Ascending aorta (tissue), 2 donors: ENCODE measurements at regions of chr7 and their contacts with region 1.

Region 1: DNA sequence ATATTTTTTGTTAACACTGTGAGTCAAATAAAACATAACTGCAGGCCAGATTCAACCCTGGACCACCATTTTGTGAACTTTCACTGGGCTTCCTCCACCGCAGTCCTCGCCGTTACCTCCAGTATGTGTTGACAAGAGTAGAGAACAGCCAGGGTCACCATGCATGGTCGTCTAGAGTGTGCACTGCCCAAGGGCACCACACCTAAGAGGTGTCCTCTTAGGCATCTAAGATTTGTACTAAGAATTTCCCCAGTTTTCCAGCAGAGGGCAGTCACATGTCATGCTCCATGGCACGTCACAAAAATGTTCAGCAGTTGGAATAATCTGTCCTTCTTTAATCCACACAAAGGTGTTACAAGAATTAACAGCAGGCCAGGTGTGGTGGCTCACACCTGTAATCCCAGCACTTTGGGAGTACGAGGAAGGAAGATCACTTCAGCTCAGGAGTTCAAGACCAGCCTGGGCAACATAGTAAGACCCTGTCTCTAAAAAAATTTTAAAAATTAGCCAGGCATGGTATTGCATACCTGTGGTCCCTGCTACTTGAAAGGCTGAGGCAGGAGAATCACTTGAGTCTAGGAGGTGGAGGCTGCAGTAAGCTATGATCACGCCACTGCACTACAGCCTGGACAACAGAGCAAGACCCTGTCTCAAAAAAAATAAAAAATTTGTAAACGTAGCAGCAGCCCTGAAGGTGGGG is 71.2 kb upstream of the FOXK1 start:
- DNase-seq: peak in 1 of 2 donors; percentile 74
- H3K4me3 ChIP-seq: no peak overlapping the region
- H3K27ac ChIP-seq: no peak overlapping the region
- H3K4me1 ChIP-seq: peaks cover 0 to 11% of the 10 kb centered on the region in 2 donors
- H3K27me3 ChIP-seq: no peaks in the 10 kb centered on the region
- CTCF ChIP-seq: peak; percentile 86 to 89 (median 87)

Region 2: GRCh38 chr7:4361757-4362156 is 249.2 kb before region 1 on chr7:
- intact Hi-C with region 1: no loop called
- DNase-seq: no peak
- H3K4me3 ChIP-seq: no peak overlapping the region
- H3K27ac ChIP-seq: no peak overlapping the region
- H3K4me1 ChIP-seq: no peaks in the 10 kb centered on the region
- H3K27me3 ChIP-seq: no peaks in the 10 kb centered on the region
- CTCF ChIP-seq: peak in 1 of 3 experiments; percentile 9

Region 3: DNA sequence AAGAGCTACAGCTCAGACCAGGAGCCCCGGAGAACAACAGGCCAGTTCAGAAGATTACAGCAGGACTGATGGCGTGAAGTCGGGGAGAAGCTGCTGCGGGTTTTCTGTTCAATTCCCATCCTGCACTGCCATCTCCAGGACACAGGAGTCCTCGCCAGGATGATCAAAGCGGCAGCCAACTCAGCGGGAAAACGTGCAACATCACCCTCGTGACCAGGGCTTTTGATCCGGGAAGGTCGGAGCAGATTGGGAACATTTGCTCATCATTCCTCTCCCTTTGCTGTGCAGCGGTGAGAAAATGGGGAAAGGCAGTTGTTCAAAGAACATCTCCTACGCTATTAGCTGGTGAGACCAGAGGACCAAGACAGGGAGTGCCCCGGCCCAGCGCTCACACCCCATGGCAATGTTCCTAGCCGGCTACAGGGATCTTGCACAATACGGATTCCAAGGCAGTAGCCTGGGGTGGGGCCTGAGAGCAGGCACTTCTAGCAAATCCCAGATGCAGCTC is 20.8 kb after region 1 on chr7:
- intact Hi-C with region 1: loop called (anchors 1 kb)
- DNase-seq: peak; percentile 50 to 93
- H3K4me3 ChIP-seq: peak overlapping the region; percentile 35 to 60
- H3K27ac ChIP-seq: peak overlapping the region; percentile 5 to 56
- H3K4me1 ChIP-seq: peaks cover 4 to 10% of the 10 kb centered on the region in 2 donors
- H3K27me3 ChIP-seq: no peaks in the 10 kb centered on the region
- CTCF ChIP-seq: peak; percentile 63 to 70 (median 66)

Region 4: GRCh38 chr7:4659551-4660286 is 48.8 kb after region 1 on chr7:
- intact Hi-C with region 1: no loop called
- DNase-seq: no peak
- H3K4me3 ChIP-seq: no peak overlapping the region
- H3K27ac ChIP-seq: no peak overlapping the region
- H3K4me1 ChIP-seq: no peaks in the 10 kb centered on the region
- H3K27me3 ChIP-seq: no peaks in the 10 kb centered on the region
- CTCF ChIP-seq: no peak

Region 5: DNA sequence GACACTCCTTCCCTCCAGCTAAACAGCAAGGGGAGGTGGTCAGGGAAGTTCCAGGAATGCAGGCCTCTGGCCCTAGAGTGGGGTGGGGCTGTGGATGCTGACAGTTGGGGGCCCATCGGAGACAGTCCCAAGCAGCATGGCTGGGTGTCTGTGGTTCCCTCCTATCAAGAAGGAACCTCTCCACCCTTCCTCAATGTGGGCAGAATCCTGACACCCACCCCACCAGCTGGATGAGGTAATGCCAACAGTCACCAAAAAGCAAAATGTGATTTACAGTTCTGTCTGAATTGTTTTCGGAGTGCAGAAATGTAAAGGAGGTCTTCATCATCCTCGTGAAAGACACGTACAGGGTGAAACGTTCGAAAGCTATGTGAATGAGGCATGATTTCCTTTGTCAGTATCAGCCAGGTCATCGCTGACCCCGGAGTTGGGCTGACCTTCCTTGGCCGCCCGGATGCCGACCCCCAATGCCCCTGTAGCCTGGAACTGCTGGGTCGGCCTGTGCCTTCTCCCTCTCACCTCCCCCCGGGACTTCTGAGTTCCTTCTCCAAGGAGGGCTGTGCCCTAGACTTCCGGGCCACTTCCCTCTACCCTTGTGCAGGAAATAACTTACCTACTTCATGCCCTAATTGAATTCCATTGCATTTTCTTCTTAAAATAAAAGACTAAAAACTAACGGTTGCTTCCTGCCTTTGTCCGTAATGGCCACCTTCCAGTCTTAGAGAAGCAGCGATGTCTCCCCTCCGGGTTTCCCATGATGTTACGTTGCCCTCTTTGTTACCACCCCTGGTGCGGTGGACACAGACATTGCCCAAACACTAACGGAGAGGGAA is 95.7 kb after region 1 on chr7:
- intact Hi-C with region 1: no loop called
- DNase-seq: no peak
- H3K4me3 ChIP-seq: no peak overlapping the region
- H3K27ac ChIP-seq: peak overlapping the region in 1 of 2 donors; percentile 12
- H3K4me1 ChIP-seq: peaks cover 5 to 29% of the 10 kb centered on the region in 2 donors
- H3K27me3 ChIP-seq: no peaks in the 10 kb centered on the region
- CTCF ChIP-seq: no peak